Psoas muscle (tissue), 8 donors: ENCODE measurements at regions of chr2 and their contacts with region 1.

Region 1: GRCh38 chr2:237201461-237202287 is 116.0 kb downstream of the COPS8 start:
- DNase-seq: peak; percentile 70 to 71
- ATAC-seq: peak; percentile 72 to 80 (median 79)
- H3K4me3 ChIP-seq: no peak overlapping the region
- H3K27ac ChIP-seq: peak overlapping the region; percentile 10
- H3K4me1 ChIP-seq: peaks cover 8% of the 10 kb centered on the region
- H3K27me3 ChIP-seq: peaks cover 0 to 3% (median 0%) of the 10 kb centered on the region in 3 donors
- CTCF ChIP-seq: no peak

Region 2: GRCh38 chr2:237165405-237166276 is 36.0 kb before region 1 on chr2:
- intact Hi-C with region 1: no loop called
- DNase-seq: no peak
- ATAC-seq: peak in 1 of 4 donors; percentile 55
- H3K4me3 ChIP-seq: no peak overlapping the region
- H3K27ac ChIP-seq: no peak overlapping the region
- H3K4me1 ChIP-seq: no peaks in the 10 kb centered on the region
- H3K27me3 ChIP-seq: no peaks in the 10 kb centered on the region
- CTCF ChIP-seq: peak; percentile 43

Region 3: GRCh38 chr2:237256887-237257286 is 55.2 kb after region 1 on chr2:
- intact Hi-C with region 1: loop called in 1 of 2 experiments (anchors 5 kb)
- DNase-seq: peak; percentile 55 to 74
- ATAC-seq: peak in 3 of 4 donors; percentile 41 to 71 (median 56)
- H3K4me3 ChIP-seq: no peak overlapping the region
- H3K27ac ChIP-seq: peak overlapping the region; percentile 53
- H3K4me1 ChIP-seq: peaks cover 7% of the 10 kb centered on the region
- H3K27me3 ChIP-seq: no peaks in the 10 kb centered on the region
- CTCF ChIP-seq: no peak